ENCODE measurements at regions of chr5 and their contacts with region 1.

Region 1: DNA sequence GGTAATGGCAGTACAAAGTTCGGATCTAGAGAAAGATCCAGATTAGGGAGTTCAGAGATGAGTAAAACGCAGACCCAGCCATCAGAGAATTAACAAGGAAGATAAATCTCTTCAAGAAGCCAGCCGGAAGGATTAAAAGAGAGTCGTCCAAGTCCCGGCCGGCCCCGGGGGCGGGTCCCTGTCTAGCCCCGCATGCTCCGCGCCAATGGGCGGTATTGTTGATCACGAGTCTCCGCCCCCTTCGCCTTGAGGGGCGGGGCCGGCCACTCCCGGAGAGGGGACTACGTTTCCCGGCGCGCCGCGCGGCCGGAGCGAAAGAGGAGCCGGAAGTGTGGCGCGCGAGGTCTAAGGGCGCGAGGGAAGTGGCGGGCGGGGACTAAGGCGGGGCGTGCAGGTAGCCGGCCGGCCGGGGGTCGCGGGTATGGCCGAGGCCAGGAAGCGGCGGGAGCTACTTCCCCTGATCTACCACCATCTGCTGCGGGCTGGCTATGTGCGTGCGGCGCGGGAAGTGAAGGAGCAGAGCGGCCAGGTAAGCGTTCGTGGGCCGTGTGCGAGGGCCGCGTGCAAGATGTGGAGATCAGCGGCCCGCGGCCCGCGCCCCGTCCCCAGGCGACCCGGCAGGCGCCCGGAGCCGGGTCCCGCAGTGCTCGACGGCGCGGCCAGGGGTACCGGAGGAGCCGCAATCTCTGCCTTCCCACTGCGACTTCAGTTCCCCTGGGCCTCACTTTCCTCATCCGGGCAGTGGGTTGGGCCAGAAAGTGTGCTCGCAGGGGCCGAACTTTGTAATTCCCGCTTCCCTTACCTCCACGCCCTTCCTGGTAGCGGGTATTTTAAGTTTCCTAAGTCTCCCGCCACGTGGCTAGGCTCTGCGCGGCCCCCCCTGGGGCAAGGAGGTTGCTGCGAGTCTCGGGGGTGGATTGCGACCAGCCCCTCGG is at the start of gene TCOF1:
- H3K4me3 Mint-ChIP-seq: peak within 1 kb of the TSS; percentile 81
- H3K27ac Mint-ChIP-seq: peak within 1 kb of the TSS; percentile 77
- H3K4me1 Mint-ChIP-seq: peaks cover 55% of the 10 kb centered on the region
- H3K27me3 Mint-ChIP-seq: peaks cover 5% of the 10 kb centered on the region

Region 2: DNA sequence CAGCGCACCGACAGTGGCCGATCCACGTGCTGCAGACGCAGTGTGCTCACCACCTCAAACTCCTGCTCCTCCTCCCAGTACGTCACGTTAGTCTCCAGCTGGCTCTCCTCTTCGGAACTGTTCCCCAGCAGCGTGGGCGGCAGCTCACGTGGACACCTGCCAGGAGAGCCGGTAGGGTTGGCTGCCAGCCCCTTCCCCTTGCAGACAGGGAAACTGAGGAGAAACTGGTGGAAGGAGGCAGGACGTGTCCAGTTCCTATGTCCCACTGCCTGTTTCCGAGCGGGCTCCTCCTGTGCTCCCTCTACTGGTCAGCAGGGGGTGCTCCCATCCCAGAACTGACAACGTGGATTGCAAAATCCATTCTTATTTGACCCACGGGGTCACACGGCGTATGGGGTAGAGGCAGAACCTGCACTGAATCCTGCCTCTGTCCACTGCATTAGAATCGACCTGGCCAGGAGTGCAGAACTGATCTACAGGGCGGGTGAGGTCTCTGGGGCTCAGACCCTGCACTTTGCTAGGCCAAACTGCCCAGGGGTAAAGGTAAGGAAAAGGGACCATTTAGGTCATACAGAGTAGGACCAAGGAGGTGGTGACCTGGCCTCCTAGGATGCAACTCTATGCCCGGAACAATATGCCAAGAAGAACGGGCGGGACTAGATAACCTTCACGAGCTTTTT is 227.6 kb before region 1 on chr5:
- intact Hi-C with region 1: loop called (anchors 10 kb)
- H3K4me3 Mint-ChIP-seq: no peak overlapping the region
- H3K27ac Mint-ChIP-seq: peak overlapping the region; percentile 42
- H3K4me1 Mint-ChIP-seq: peaks cover 59% of the 10 kb centered on the region
- H3K27me3 Mint-ChIP-seq: peaks cover 7% of the 10 kb centered on the region

Region 3: DNA sequence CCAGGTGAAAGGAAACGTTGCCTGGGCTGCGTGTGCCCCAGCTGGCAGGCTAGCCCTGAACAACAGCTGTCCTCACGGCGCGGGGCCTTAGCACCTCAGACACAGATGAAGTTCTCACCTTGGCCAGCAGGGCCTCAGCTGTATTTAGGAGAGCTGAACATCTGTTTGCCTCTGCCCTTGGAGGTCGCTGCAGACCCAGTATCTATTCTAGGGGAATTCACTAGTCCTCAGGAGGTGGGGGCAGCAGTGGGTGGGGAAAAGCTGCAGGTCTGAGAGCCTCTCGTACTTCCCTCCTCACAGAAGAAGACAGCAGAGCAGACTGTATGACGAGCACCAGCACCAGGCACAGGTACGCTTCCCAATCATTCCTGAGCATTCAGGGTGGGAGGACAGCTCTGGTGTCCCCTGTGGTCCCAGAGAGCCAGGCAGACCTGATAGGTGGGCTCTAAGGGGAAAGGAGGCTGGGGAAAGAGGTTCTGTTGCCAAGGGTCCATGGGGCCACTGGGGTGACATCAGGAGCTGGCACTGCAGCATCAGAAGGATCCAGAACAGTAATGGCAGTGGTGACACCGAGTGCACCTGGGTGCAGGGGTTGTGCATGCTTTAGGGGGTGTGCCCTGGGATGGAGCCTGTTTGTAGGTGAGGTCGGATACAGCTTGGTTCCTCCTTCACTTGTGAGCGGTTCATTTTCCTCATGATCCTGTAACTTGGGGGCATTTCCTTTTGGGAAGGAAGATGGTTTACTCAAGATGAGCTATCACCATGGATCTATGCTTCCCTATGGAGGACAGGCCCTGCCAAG is 41.3 kb after region 1 on chr5:
- intact Hi-C with region 1: no loop called
- H3K4me3 Mint-ChIP-seq: no peak overlapping the region
- H3K27ac Mint-ChIP-seq: peak overlapping the region; percentile 99
- H3K4me1 Mint-ChIP-seq: peaks cover 49% of the 10 kb centered on the region
- H3K27me3 Mint-ChIP-seq: no peaks in the 10 kb centered on the region

Measured in dendritic cell treated with granulocyte-macrophage colony-stimulating factor and Interleukin-4, amounts not matched to agents 40 ng/mL and 50 ng/mL, for 4 days (primary cell).